Pancreas (tissue), 10 donors: ENCODE measurements at regions of chr2 and their contacts with region 1.

Region 1: GRCh38 chr2:198309673-198310280 is 505.4 kb downstream of the PLCL1 start:
- DNase-seq: peak in 1 of 6 donors; percentile 46
- ATAC-seq: peak; percentile 61 to 73 (median 70)
- H3K4me3 ChIP-seq: no peak overlapping the region
- H3K27ac ChIP-seq: no peak overlapping the region
- H3K4me1 ChIP-seq: no peaks in the 10 kb centered on the region
- H3K27me3 ChIP-seq: peaks cover 0 to 5% (median 0%) of the 10 kb centered on the region in 4 donors
- CTCF ChIP-seq: peak; percentile 48 to 86 (median 76)

Region 2: DNA sequence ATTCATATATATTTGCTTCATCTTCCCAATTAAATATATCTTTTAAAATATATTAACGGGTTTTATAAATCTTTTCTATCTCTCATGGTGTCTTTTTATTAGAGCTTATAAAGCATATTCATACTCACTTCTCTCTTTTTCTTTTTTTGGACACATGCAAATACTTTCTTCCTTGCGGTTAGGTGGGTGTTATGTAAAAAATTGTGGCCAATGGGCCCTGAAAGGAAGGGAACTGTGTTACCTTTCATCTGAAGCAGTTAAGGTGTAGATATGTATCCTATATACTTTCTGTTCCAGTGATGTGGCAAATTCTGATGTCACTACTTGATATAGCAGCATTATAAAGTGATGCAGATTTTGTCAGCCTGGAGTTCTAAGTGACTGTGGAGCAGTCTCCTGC is 209.2 kb after region 1 on chr2:
- intact Hi-C with region 1: no loop called
- DNase-seq: no peak
- ATAC-seq: no peak
- H3K4me3 ChIP-seq: no peak overlapping the region
- H3K27ac ChIP-seq: no peak overlapping the region
- H3K4me1 ChIP-seq: no peaks in the 10 kb centered on the region
- H3K27me3 ChIP-seq: no peaks in the 10 kb centered on the region
- CTCF ChIP-seq: no peak

Region 3: GRCh38 chr2:199488772-199489400 is 1179.1 kb after region 1 on chr2:
- intact Hi-C with region 1: loop called in 1 of 3 experiments (anchors 10 kb)
- DNase-seq: peak in 5 of 6 donors; percentile 29 to 67 (median 33)
- ATAC-seq: peak in 3 of 4 donors; percentile 80 to 83 (median 82)
- H3K4me3 ChIP-seq: no peak overlapping the region
- H3K27ac ChIP-seq: no peak overlapping the region
- H3K4me1 ChIP-seq: no peaks in the 10 kb centered on the region
- H3K27me3 ChIP-seq: peaks cover 0 to 5% (median 0%) of the 10 kb centered on the region in 4 donors
- CTCF ChIP-seq: peak; percentile 47 to 55 (median 48)

Region 4: GRCh38 chr2:199739413-199740110 is 1429.8 kb after region 1 on chr2:
- intact Hi-C with region 1: loop called in 1 of 3 experiments (anchors 5 kb)
- DNase-seq: peak; percentile 20 to 90 (median 64)
- ATAC-seq: peak; percentile 56 to 89 (median 81)
- H3K4me3 ChIP-seq: no peak overlapping the region
- H3K27ac ChIP-seq: no peak overlapping the region
- H3K4me1 ChIP-seq: peaks cover 0 to 17% (median 0%) of the 10 kb centered on the region in 3 donors
- H3K27me3 ChIP-seq: peaks cover 0 to 3% (median 0%) of the 10 kb centered on the region in 4 donors
- CTCF ChIP-seq: peak; percentile 84 to 98 (median 88)